ENCODE measurements at regions of chr14 and their contacts with region 1.

Region 1: GRCh38 chr14:37150414-37150813 is 22.0 kb downstream of the SLC25A21 start:
- DNase-seq: no peak
- H3K4me3 ChIP-seq: no peak overlapping the region
- H3K27ac ChIP-seq: no peak overlapping the region
- H3K4me1 ChIP-seq: no peaks in the 10 kb centered on the region
- H3K27me3 ChIP-seq: no peaks in the 10 kb centered on the region
- CTCF ChIP-seq: peak; percentile 53

Region 2: DNA sequence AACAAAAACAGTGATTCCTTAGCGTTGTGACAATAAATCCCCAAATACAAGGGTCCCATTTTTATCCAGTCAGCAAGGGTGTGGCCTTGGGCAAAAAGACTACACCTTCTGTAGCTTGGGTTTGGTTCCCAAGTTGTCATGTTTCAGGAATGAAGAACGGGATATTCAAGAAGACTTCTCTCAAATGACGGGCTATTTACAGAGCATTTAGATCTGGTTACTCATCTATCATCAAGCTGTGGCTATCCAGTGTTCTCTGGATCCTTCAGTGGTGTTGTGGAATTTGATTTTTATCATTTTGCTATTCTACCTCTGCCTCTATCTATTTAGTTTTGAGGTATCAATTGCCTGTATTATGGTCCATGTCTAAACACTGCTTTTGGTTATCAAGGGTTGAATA is 197.7 kb before region 1 on chr14:
- intact Hi-C with region 1: loop called (anchors 10 kb)
- DNase-seq: no peak
- H3K4me3 ChIP-seq: no peak overlapping the region
- H3K27ac ChIP-seq: no peak overlapping the region
- H3K4me1 ChIP-seq: no peaks in the 10 kb centered on the region
- H3K27me3 ChIP-seq: no peaks in the 10 kb centered on the region
- CTCF ChIP-seq: no peak